Activated CD4-positive, alpha-beta T cell treated with anti-CD3 and anti-CD28 coated beads for 36 hours (primary cell): ENCODE measurements at regions of chr7 and their contacts with region 1.

Region 1: GRCh38 chr7:142811154-142811737 is 40.5 kb downstream of the PRSS2 start:
- DNase-seq: peak; percentile 52
- ATAC-seq: no peak
- H3K4me3 Mint-ChIP-seq: peak overlapping the region; percentile 68
- H3K27ac Mint-ChIP-seq: peak overlapping the region; percentile 99
- H3K4me1 Mint-ChIP-seq: peaks cover 83% of the 10 kb centered on the region
- H3K27me3 Mint-ChIP-seq: no peaks in the 10 kb centered on the region

Region 2: DNA sequence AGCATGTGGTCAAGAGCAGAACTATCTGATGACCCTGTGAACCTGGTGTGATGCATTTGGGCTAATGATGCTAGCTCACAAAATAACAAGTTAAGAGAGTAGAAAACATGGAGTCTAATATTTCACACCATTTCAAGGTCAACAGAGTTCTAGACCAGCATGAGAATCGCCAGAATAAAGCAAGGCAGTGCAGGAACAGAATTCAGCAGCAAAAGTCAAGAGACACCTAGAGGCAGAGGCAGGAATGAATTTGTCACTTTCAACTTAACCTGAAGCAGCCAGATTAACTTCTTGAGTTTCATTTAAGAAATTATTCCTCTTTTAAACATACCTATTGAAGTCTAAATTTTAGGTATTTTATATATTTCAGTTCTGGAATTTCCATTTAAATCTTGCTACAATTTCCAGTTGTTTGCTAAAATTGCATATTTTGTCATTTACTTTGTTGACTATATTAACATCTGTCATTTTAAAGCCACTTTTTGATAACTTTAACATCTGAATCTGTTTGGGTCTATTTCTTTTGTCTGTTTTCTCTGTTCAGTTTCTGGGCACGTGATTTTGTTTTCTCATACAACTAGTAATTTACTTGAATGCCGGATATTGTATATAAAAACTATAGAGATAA is 509.2 kb before region 1 on chr7:
- CTCF ChIA-PET with region 1: interaction called, 6 read pairs
- POLR2A ChIA-PET with region 1: interaction called, 6 read pairs
- intact Hi-C with region 1: loop called (anchors 2 kb)
- DNase-seq: no peak
- ATAC-seq: no peak
- H3K4me3 Mint-ChIP-seq: no peak overlapping the region
- H3K27ac Mint-ChIP-seq: no peak overlapping the region
- H3K4me1 Mint-ChIP-seq: peaks cover 29% of the 10 kb centered on the region
- H3K27me3 Mint-ChIP-seq: peaks cover 8% of the 10 kb centered on the region

Region 3: DNA sequence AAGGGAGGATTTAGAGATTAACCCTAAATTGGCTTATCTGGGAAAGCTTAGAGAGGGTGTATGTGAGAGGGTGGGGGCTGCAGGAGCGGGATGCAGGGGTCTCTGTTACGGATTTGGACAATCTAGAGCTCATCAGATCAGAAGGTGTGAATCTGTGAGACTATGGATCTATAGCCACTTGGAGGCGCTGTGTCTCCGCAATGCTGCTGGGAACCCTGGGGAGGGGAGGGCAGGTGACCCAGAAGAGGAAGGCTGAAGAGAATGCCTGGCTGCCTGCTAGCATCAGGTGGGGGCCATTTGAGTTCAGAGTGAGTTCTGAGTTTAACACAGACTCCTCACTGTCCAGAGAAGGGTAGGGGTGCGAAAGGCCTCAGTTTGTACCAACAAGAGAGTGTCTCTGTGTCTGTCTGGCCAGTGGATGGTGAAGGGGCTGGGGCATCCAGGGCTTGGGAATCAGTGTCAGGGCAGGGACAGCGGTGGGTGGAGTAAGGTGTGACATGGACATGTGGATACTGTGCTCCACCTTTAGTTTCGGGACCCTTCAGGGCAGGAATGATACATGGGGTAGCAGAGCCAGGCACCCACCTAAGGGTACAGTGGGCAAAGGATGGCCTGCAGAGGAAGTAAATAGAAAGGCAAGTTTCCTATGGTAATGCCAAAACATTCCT is 366.1 kb before region 1 on chr7:
- CTCF ChIA-PET with region 1: interaction called, 10 read pairs
- POLR2A ChIA-PET with region 1: no interaction called
- intact Hi-C with region 1: loop called in 1 of 2 experiments (anchors 5 kb)
- DNase-seq: peak; percentile 69
- ATAC-seq: peak; percentile 78
- H3K4me3 Mint-ChIP-seq: no peak overlapping the region
- H3K27ac Mint-ChIP-seq: peak overlapping the region; percentile 47
- H3K4me1 Mint-ChIP-seq: peaks cover 34% of the 10 kb centered on the region
- H3K27me3 Mint-ChIP-seq: no peaks in the 10 kb centered on the region

Region 4: GRCh38 chr7:142603870-142604448 is 207.3 kb before region 1 on chr7:
- CTCF ChIA-PET with region 1: interaction called, 22 read pairs
- POLR2A ChIA-PET with region 1: no interaction called
- intact Hi-C with region 1: loop called (anchors 1 kb)
- DNase-seq: peak; percentile 69
- ATAC-seq: peak; percentile 60
- H3K4me3 Mint-ChIP-seq: peak overlapping the region; percentile 31
- H3K27ac Mint-ChIP-seq: peak overlapping the region; percentile 67
- H3K4me1 Mint-ChIP-seq: peaks cover 23% of the 10 kb centered on the region
- H3K27me3 Mint-ChIP-seq: peaks cover 3% of the 10 kb centered on the region

Region 5: GRCh38 chr7:142788303-142789289 is 22.6 kb before region 1 on chr7:
- CTCF ChIA-PET with region 1: interaction called, 182 read pairs
- POLR2A ChIA-PET with region 1: interaction called, 82 read pairs
- intact Hi-C with region 1: loop called (anchors 1 kb)
- DNase-seq: no peak
- ATAC-seq: no peak
- H3K4me3 Mint-ChIP-seq: peak overlapping the region; percentile 99
- H3K27ac Mint-ChIP-seq: peak overlapping the region; percentile 99
- H3K4me1 Mint-ChIP-seq: peaks cover 21% of the 10 kb centered on the region
- H3K27me3 Mint-ChIP-seq: no peaks in the 10 kb centered on the region

Region 6: GRCh38 chr7:142927085-142927745 is 116.0 kb after region 1 on chr7:
- CTCF ChIA-PET with region 1: no interaction called
- POLR2A ChIA-PET with region 1: no interaction called
- intact Hi-C with region 1: no loop called
- DNase-seq: no peak
- ATAC-seq: no peak
- H3K4me3 Mint-ChIP-seq: no peak overlapping the region
- H3K27ac Mint-ChIP-seq: no peak overlapping the region
- H3K4me1 Mint-ChIP-seq: no peaks in the 10 kb centered on the region
- H3K27me3 Mint-ChIP-seq: no peaks in the 10 kb centered on the region

Region 7: DNA sequence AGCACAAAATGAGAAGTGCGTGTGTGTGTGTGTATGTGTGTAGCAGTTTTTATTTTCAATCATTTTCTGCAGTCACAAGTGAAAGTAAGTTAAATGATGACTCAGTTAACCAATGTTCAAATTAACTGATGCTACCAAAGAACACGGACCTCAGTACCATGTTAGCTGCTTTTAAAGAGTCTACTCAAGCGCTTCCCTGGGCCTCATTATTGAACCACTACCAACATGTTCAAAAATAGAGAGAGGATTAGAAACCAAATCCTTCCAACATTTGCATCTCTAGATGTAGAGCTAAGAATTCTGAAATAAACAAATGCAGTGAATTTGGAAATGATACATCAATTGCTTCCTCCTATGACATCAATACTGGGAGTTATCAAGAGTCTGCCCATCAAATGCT is 371.8 kb after region 1 on chr7 and contains the start of gene TAS2R39:
- CTCF ChIA-PET with region 1: no interaction called
- POLR2A ChIA-PET with region 1: no interaction called
- intact Hi-C with region 1: no loop called
- DNase-seq: no peak
- ATAC-seq: no peak
- H3K4me3 Mint-ChIP-seq: no peak within 1 kb of the TSS
- H3K27ac Mint-ChIP-seq: no peak within 1 kb of the TSS
- H3K4me1 Mint-ChIP-seq: no peaks in the 10 kb centered on the region
- H3K27me3 Mint-ChIP-seq: peaks cover 11% of the 10 kb centered on the region
- total RNA-seq, gene TAS2R39: not detected

Region 8: GRCh38 chr7:143240291-143241168 is 429.3 kb after region 1 on chr7:
- CTCF ChIA-PET with region 1: interaction called, 4 read pairs
- POLR2A ChIA-PET with region 1: no interaction called
- intact Hi-C with region 1: loop called in 1 of 2 experiments (anchors 1 kb)
- DNase-seq: peak; percentile 80
- ATAC-seq: peak; percentile 73
- H3K4me3 Mint-ChIP-seq: no peak overlapping the region
- H3K27ac Mint-ChIP-seq: peak overlapping the region; percentile 51
- H3K4me1 Mint-ChIP-seq: peaks cover 28% of the 10 kb centered on the region
- H3K27me3 Mint-ChIP-seq: peaks cover 7% of the 10 kb centered on the region